ENCODE measurements at regions of chr12 and their contacts with region 1.

Region 1: GRCh38 chr12:68040450-68041075 is 51.3 kb downstream of the IFNG-AS1 start:
- DNase-seq: peak; percentile 82
- ATAC-seq: peak; percentile 78
- H3K4me3 Mint-ChIP-seq: no peak overlapping the region
- H3K27ac Mint-ChIP-seq: peak overlapping the region; percentile 63
- H3K4me1 Mint-ChIP-seq: peaks cover 51% of the 10 kb centered on the region
- H3K27me3 Mint-ChIP-seq: no peaks in the 10 kb centered on the region

Region 2: DNA sequence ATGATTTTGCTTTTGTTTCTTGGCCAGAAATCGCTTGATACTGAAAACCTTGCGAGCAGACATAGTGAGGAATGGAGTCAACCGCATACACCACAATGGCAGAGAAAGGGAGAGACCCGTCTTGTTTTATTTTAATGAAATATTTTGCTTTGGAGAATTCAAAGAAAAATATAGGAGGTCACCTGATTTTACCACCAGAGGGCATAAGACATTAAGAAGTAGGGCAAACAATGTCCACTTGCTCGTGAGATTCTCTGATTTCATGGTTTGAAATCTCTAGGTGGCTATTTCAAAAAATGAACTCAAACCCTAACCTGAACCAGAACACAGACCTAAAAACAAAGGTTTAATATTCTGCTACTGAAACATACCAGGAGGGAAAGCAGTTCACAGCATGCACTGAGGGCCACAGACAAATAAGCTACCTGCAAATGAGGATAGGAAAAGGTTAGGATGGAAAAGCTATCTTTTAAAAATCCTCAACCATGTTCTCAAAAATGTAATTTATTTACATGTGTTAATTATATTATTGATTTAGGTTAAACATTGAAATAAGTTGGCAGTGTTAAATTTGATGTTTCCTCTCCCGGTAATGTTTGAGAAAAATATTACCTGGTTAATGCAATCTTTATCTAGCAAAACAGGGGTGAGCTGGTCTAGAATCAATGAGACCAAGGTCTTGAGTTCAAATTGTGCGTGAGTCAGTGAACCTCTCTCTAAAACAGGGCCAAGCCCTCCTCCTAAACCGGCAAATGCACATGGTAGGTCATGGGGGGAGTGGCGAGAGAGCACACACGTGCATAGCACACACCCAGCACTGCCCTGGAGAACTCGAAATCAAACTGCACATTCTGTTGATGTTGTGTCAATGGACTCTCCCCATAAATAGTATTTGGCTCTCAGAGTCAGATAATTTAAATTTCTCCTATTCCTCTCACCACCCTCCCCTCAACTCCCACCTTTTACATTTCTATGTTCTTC is 38.8 kb before region 1 on chr12:
- CTCF ChIA-PET with region 1: interaction called, 12 read pairs
- DNase-seq: no peak
- ATAC-seq: peak; percentile 23
- H3K4me3 Mint-ChIP-seq: no peak overlapping the region
- H3K27ac Mint-ChIP-seq: no peak overlapping the region
- H3K4me1 Mint-ChIP-seq: peaks cover 19% of the 10 kb centered on the region
- H3K27me3 Mint-ChIP-seq: no peaks in the 10 kb centered on the region

Region 3: GRCh38 chr12:68113644-68114043 is 73.1 kb after region 1 on chr12:
- CTCF ChIA-PET with region 1: interaction called, 37 read pairs
- DNase-seq: peak; percentile 72
- ATAC-seq: peak; percentile 54
- H3K4me3 Mint-ChIP-seq: no peak overlapping the region
- H3K27ac Mint-ChIP-seq: no peak overlapping the region
- H3K4me1 Mint-ChIP-seq: peaks cover 49% of the 10 kb centered on the region
- H3K27me3 Mint-ChIP-seq: no peaks in the 10 kb centered on the region

Region 4: DNA sequence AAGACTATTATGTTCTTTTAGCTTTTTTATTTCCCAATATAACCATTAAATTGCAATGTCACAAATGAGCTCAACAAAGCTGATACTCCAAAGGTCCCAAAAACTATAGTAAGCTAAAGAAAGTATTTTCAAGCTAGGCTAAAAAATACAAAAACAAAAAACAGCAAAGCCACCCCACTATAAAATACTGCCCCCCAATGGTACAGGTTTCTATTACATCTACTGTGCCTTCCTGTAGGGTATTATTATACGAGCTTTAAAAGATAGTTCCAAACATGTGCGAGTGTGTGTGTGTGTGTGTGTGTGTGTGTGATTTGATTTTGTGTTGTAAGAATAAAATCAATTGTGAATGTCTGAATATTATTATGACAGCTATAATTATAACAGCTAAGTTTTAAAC is 117.9 kb after region 1 on chr12:
- CTCF ChIA-PET with region 1: interaction called, 155 read pairs
- DNase-seq: no peak
- ATAC-seq: peak; percentile 10
- H3K4me3 Mint-ChIP-seq: peak overlapping the region; percentile 88
- H3K27ac Mint-ChIP-seq: peak overlapping the region; percentile 70
- H3K4me1 Mint-ChIP-seq: peaks cover 68% of the 10 kb centered on the region
- H3K27me3 Mint-ChIP-seq: no peaks in the 10 kb centered on the region

Region 5: DNA sequence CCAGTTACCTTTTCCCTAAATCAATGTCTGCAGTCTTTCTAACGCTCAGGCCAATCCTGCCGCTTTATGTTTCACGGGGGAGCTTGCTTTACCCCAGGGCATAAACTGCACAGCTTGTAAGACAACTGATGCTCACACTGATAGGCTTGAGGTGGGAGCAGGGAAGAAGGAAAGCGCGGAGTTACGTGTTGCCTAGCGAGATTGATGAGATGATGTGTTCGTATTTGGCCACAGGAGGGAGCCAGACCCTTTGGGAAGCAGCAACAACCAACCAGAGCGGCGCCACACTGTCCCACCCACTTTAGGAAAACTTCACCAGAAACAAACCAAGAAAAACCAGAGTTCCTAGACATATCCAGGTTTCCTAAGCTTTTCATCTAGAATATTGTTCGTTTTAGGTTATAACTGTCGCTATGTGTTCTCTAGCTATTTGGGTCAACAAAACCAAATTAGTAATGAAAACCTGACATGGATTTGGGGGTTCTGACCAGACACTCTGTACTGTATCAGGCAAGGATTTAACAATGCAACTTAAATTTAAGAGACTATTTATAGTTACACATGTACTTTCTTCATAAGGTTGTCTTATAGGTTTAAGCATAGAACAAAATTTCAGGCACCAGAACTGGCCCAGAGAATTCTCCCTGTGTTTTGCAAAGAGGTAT is 182.7 kb after region 1 on chr12:
- CTCF ChIA-PET with region 1: interaction called, 39 read pairs
- DNase-seq: peak; percentile 83
- ATAC-seq: peak; percentile 99
- H3K4me3 Mint-ChIP-seq: peak overlapping the region; percentile 39
- H3K27ac Mint-ChIP-seq: peak overlapping the region; percentile 75
- H3K4me1 Mint-ChIP-seq: peaks cover 32% of the 10 kb centered on the region
- H3K27me3 Mint-ChIP-seq: peaks cover 17% of the 10 kb centered on the region

Measured in activated CD8-positive, alpha-beta memory T cell treated with anti-CD3 and anti-CD28 coated beads, Interleukin-2, amount 10 ng/mL, durations not matched to agents 7 days and 5 days (primary cell).